Common myeloid progenitor, CD34-positive (primary cell): ENCODE measurements at regions of chr15 and their contacts with region 1.

Region 1: DNA sequence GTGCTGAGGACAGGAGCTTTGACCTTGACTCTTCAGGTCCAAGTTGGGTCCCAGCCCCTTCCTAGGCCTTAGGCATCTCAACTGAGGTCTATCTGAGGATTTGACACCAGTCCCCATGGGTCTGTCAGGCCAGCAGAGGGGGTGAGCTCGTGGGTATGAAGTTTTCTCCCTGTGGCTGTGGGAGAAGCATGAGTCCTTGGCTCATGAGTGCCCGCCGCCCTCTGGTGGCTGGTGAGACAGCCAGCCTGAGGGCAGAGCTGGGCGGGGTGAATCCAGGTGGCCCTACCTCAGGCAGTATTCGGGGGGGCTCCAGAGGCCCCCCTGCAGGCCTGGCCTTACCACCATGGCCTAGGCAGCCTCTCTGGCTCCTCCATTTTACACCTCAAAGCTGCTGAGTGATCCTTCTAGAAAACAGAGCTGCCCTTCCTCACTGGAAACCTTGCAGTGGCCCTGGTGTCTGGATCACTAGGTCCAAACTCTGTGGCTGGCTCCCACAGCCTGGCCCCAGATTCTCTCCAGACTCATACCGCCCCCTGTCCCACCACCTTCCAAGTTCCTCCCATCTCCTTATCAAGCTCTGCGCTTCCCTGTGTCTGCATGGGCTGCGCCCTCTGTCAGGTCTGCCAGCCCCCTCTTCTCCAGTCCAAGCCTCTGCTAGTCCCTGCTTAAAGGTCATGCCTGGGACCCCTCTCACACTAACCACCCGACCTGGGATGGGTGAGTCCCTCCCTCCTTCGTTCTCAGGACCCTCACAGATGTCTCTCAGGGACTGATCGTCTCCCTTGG is 16.1 kb downstream of the SH2D7 start:
- DNase-seq: peak; percentile 93 to 96 (median 96)
- H3K4me3 ChIP-seq: no peak overlapping the region
- H3K27ac ChIP-seq: no peak overlapping the region
- H3K4me1 ChIP-seq: peaks cover 2 to 27% (median 12%) of the 10 kb centered on the region in 4 experiments
- H3K27me3 ChIP-seq: no peaks in the 10 kb centered on the region

Region 2: DNA sequence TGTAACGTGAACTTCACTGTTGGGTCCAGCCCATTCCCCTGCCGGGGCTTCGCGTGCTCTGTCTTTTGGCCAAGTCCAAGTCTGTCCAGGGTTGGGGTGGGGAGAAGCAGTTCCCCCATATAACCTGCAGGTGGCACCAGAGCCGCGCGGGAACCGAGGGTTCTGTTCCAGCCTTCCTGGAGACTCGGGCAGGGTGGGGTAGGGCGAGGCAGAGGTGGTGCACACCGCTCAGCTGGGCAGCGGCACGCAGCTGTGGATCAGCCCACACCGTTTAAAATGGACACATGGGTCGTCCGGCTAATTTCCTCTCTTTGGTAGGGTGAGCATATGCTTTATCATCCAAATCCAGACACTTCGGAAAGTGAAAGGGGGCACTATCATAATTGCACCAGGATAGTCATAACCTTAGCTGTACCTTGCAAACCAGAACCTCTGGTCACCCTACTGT is 149.0 kb before region 1 on chr15:
- CTCF ChIA-PET with region 1: interaction called, 38 read pairs
- POLR2A ChIA-PET with region 1: no interaction called
- DNase-seq: peak; percentile 60 to 76 (median 71)
- H3K4me3 ChIP-seq: peak overlapping the region in 4 of 7 experiments; percentile 21 to 76 (median 43)
- H3K27ac ChIP-seq: no peak overlapping the region
- H3K4me1 ChIP-seq: peaks cover 0 to 14% (median 6%) of the 10 kb centered on the region in 4 experiments
- H3K27me3 ChIP-seq: no peaks in the 10 kb centered on the region

Region 3: GRCh38 chr15:78018946-78019644 is 89.4 kb before region 1 on chr15:
- CTCF ChIA-PET with region 1: interaction called, 10 read pairs
- POLR2A ChIA-PET with region 1: no interaction called
- DNase-seq: peak; percentile 76 to 97 (median 96)
- H3K4me3 ChIP-seq: peak overlapping the region in 3 of 7 experiments; percentile 26 to 55 (median 52)
- H3K27ac ChIP-seq: peak overlapping the region in 1 of 2 experiments; percentile 80
- H3K4me1 ChIP-seq: peaks cover 12 to 28% (median 20%) of the 10 kb centered on the region in 4 experiments
- H3K27me3 ChIP-seq: no peaks in the 10 kb centered on the region

Region 4: DNA sequence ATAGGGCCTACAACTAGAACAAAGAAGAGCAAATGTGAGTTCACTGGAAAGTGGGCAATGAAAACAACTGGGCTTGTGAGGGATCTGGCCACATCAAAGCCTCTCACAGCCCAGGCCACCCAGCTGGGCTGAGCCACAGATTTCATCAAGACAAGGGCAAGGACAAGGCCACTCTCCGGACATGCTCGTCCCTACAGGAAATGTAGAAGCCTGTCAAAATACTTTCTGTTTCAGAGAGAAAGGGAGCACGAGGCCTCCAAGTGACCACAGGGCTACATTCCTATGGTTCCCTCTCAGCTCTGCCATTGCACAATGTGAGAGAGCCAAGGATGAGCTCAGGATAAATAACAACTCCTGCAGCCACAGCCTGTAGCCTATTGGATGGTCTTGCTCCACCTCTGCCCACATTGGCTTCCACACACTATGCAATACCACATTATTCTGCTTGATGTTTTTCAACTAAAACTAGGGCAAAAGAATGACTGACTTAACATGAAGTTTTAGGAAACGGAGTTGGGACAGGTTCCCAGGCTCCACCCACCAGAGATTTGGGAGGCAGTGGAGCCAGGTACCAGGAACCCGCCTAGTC is 43.1 kb before region 1 on chr15:
- CTCF ChIA-PET with region 1: interaction called, 12 read pairs
- POLR2A ChIA-PET with region 1: no interaction called
- DNase-seq: peak in 2 of 3 donors; percentile 51 to 57
- H3K4me3 ChIP-seq: peak overlapping the region in 4 of 7 experiments; percentile 6 to 29 (median 24)
- H3K27ac ChIP-seq: no peak overlapping the region
- H3K4me1 ChIP-seq: peaks cover 17 to 89% (median 67%) of the 10 kb centered on the region in 4 experiments
- H3K27me3 ChIP-seq: no peaks in the 10 kb centered on the region

Region 5: GRCh38 chr15:78120523-78120922 is 12.0 kb after region 1 on chr15:
- CTCF ChIA-PET with region 1: interaction called, 11 read pairs
- POLR2A ChIA-PET with region 1: no interaction called
- DNase-seq: no peak
- H3K4me3 ChIP-seq: no peak overlapping the region
- H3K27ac ChIP-seq: no peak overlapping the region
- H3K4me1 ChIP-seq: no peaks in the 10 kb centered on the region
- H3K27me3 ChIP-seq: no peaks in the 10 kb centered on the region

Region 6: GRCh38 chr15:78204351-78205309 is 96.1 kb after region 1 on chr15:
- CTCF ChIA-PET with region 1: interaction called, 17 read pairs
- POLR2A ChIA-PET with region 1: no interaction called
- DNase-seq: no peak
- H3K4me3 ChIP-seq: no peak overlapping the region
- H3K27ac ChIP-seq: no peak overlapping the region
- H3K4me1 ChIP-seq: peaks cover 0 to 13% (median 5%) of the 10 kb centered on the region in 4 experiments
- H3K27me3 ChIP-seq: no peaks in the 10 kb centered on the region